Right cardiac atrium (tissue), 5 donors: ENCODE measurements at regions of chr5 and their contacts with region 1.

Region 1: GRCh38 chr5:18179579-18179978 is 545.3 kb downstream of the TAF11L14 start:
- DNase-seq: no peak
- ATAC-seq: no peak
- H3K4me3 ChIP-seq: no peak overlapping the region
- H3K27ac ChIP-seq: no peak overlapping the region
- H3K4me1 ChIP-seq: no peaks in the 10 kb centered on the region
- H3K27me3 ChIP-seq: no peaks in the 10 kb centered on the region

Region 2: GRCh38 chr5:17910318-17910717 is 269.3 kb before region 1 on chr5:
- intact Hi-C with region 1: no loop called
- DNase-seq: no peak
- ATAC-seq: no peak
- H3K4me3 ChIP-seq: no peak overlapping the region
- H3K27ac ChIP-seq: no peak overlapping the region
- H3K4me1 ChIP-seq: no peaks in the 10 kb centered on the region
- H3K27me3 ChIP-seq: no peaks in the 10 kb centered on the region

Region 3: GRCh38 chr5:18195910-18196309 is 16.3 kb after region 1 on chr5:
- intact Hi-C with region 1: loop called in 1 of 4 experiments (anchors 2 kb)
- DNase-seq: no peak
- ATAC-seq: no peak
- H3K4me3 ChIP-seq: no peak overlapping the region
- H3K27ac ChIP-seq: no peak overlapping the region
- H3K4me1 ChIP-seq: no peaks in the 10 kb centered on the region
- H3K27me3 ChIP-seq: no peaks in the 10 kb centered on the region

Region 4: DNA sequence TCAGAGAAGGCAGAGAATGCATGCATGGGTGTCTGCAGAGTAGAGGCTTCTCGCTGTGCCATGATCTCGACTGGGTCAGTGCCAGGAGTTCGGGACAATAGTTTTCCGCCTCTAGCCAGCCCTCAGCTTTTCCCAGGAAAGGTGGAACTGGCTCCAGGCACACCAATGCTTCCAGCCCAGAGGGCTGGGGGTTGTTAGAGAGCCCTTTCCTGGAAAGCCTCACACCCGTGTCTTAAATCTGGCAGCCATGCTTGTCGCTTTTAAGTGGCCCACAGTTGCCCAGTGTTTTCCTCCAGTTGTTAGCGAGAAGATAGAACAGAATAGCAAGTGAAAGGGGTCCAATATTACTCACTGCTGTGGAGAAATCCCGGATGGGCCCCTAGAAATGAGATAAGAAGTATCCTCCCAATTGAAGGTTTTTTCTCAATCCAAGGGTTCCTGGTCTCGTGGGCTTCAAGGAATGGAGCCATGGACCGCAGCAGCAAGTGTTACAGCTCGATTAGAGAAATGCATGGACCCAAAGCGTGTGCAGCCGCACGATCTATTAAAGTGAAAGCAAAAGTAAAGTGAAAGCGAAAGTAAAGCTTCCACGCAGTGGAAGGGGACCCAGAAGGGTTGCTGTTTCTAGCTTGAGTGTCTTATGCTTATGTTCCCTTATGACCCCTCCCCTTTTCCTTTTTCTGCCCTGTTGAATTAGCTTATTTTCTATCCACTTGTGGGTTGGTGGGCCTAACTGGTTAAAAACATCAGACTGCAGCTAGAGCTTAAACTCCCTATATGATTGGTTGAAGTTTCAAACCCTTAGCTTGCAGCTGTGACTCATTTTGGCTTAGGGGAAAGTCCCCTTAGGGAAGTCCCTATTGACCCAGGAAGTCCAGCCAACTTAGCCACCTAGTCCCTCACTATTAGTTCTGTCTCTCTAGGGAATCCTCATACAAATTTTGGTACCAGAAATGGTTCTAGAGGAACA is 566.4 kb after region 1 on chr5:
- intact Hi-C with region 1: no loop called
- DNase-seq: peak in 1 of 3 donors; percentile 16
- ATAC-seq: peak in 1 of 2 donors; percentile 75
- H3K4me3 ChIP-seq: peak overlapping the region; percentile 48
- H3K27ac ChIP-seq: peak overlapping the region; percentile 73
- H3K4me1 ChIP-seq: no peaks in the 10 kb centered on the region
- H3K27me3 ChIP-seq: no peaks in the 10 kb centered on the region